ENCODE measurements at regions of chr3 and their contacts with region 1.

Region 1: GRCh38 chr3:163916596-163917554 is 1161.4 kb downstream of the SI start:
- DNase-seq: peak; percentile 33
- H3K4me3 ChIP-seq: no peak overlapping the region
- H3K27ac ChIP-seq: no peak overlapping the region
- H3K4me1 ChIP-seq: no peaks in the 10 kb centered on the region
- CTCF ChIP-seq: peak; percentile 74

Region 2: DNA sequence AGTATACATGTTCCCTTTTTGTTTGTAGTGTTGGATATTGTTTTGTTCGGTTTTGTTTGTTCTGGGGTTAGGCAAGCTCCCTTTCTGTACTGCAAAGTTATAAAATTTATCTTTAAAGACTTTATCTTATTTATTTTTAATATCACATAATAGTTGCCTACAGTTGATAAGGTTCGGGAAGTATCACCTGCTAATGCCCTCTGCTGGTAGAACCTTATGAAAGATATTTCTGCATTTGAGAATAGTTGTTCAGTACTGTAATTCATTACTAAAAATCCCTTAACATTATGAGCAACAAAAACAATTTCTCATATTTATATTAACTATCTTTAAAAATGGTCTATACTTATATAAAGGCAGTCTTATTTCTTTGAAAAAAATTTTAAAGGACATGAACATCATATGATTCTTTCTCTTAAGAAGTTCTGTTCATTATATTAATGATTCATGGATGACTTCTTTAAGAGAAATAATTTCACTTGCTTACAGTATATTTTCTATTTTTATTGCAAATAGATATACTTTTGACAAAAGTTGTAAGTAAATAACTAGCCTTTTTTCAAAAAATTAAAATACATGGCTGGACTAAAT is 34.6 kb after region 1 on chr3:
- CTCF ChIA-PET with region 1: no interaction called
- POLR2A ChIA-PET with region 1: no interaction called
- intact Hi-C with region 1: loop called (anchors 5 kb)
- DNase-seq: peak; percentile 27
- H3K4me3 ChIP-seq: no peak overlapping the region
- H3K27ac ChIP-seq: no peak overlapping the region
- H3K4me1 ChIP-seq: no peaks in the 10 kb centered on the region
- CTCF ChIP-seq: peak; percentile 79

Region 3: DNA sequence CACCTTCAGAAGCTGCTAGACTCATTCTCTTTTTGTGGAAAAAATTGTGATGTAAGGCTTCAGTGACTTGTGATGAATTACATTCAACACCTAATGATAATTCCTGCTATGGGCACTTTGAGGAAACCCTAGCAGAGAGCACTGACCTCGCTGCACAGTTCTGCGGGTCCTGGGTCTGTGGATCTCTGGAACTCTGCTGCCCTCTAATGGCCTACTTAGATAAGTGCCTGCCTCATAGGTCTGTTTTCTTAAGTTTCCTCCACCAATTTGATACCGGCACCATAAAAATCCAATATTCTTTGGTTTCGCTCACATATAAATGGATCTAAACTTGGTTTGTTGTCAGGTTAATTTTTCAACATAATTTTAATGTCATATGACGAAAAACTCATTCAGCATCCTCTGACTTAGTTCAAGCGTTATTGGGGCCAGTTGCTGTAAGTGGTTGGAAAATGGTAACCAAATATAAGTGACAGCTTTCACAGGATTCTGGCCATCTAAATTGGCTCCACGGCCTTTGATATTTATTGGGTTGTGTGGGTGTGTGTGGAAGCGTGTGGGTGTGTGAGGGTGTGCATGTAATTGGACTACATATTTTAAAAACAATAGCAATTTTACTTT is 1268.9 kb after region 1 on chr3:
- CTCF ChIA-PET with region 1: no interaction called
- POLR2A ChIA-PET with region 1: no interaction called
- intact Hi-C with region 1: loop called (anchors 10 kb)
- DNase-seq: peak; percentile 59
- H3K4me3 ChIP-seq: no peak overlapping the region
- H3K27ac ChIP-seq: no peak overlapping the region
- H3K4me1 ChIP-seq: no peaks in the 10 kb centered on the region
- CTCF ChIP-seq: peak; percentile 91